CD4-positive, alpha-beta memory T cell (primary cell): ENCODE measurements at regions of chr5 and their contacts with region 1.

Region 1: DNA sequence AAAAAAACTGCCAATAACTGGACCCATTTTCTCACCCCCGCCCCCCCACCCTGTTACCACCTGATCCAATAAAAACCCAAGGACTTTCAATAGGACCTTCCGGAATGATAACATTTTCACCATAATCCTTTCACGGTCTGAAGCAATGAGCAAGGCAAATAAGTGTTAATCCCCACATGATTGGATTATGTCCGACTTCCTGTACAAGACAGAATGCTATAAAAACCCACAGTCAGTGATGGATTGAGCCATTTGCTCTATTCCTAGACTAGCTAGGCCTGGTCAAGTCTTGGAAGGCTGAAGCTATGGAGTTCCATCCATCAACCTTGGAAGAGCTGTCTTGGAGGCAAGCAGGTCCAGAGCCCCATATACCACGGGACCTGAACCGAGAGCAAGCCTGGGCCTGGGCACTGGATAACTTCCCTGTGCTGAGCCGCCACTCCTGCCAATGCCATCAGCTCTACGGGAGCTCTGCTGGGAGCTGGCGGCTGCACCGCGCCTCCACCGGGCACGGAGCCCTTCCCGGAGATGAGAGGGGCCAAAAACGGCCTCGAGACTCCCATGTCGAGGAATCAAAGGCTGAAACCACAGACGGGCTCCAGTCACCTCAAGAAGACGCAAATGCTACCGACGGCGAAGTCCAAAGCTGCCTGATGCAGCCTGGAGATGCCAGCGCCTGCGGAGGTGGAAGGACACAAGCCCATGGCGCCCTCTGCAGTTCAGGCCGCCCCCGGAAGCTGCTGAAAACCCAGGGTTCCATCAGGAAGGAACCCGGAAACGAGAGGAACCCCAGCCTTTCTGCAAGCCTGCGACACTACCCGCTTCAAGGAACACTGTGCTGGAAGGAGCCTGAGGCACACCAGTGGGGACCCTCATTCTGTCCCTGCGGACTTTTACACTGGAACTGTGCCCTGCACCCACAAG is 69.2 kb downstream of the ANXA2R start:
- DNase-seq: no peak
- H3K4me3 ChIP-seq: no peak overlapping the region
- H3K4me3 Mint-ChIP-seq: no peak overlapping the region
- H3K27ac ChIP-seq: no peak overlapping the region
- H3K27ac Mint-ChIP-seq: peak overlapping the region in 2 of 7 donors; percentile 35 to 61
- H3K4me1 ChIP-seq: peaks cover 3% of the 10 kb centered on the region
- H3K4me1 Mint-ChIP-seq: peaks cover 5 to 7% (median 6%) of the 10 kb centered on the region in 4 donors
- H3K27me3 ChIP-seq: no peaks in the 10 kb centered on the region
- H3K27me3 Mint-ChIP-seq: no peaks in the 10 kb centered on the region

Region 2: DNA sequence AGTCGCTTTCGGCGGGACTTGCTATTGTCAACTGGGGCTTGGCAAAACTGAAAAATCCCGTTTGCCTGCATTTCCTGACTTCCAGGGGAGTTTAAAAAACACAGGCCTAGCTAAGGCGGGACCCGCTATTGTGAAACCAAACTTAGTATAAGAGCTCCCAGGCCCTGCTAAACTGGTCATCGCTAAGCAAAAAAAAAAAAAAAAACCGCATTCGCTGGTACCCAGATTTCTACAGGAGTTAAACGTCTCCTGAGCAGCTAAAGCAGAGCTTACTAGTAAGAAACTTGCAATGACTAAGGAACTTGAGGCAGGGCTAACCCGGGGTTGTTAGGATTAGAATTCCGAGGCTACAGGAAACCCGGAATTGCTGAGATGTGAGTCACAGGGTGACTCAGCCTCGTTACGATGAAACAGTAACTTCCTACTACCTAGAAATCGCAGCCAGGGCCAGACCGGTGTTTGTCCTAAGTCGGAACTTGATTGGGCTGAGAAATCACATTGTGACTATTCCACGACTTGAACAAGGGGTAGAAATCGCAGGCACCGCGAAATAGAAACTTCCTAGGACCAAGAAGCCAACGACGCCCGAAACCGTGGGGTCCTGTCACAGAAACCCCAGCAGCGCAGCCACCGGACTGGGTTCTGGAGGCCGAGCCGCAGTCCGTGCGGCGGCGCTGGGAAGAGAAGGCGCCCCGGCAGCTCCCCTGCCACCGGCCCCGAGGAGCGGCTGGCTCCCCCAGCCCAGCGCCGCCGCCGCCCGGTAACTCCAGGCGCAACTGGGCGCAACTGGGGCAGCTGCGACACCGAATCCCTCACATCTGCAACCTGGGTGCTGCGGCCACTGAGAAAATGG is 20.2 kb before region 1 on chr5:
- CTCF ChIA-PET with region 1: interaction called, 5 read pairs
- POLR2A ChIA-PET with region 1: interaction called, 12 read pairs
- intact Hi-C with region 1: no loop called
- DNase-seq: peak; percentile 61 to 90 (median 66)
- H3K4me3 ChIP-seq: peak overlapping the region; percentile 83 to 90
- H3K4me3 Mint-ChIP-seq: peak overlapping the region; percentile 93 to 99 (median 98)
- H3K27ac ChIP-seq: peak overlapping the region; percentile 96
- H3K27ac Mint-ChIP-seq: peak overlapping the region; percentile 99 to 100 (median 100)
- H3K4me1 ChIP-seq: peaks cover 22% of the 10 kb centered on the region
- H3K4me1 Mint-ChIP-seq: peaks cover 7 to 42% (median 30%) of the 10 kb centered on the region in 4 donors
- H3K27me3 ChIP-seq: no peaks in the 10 kb centered on the region
- H3K27me3 Mint-ChIP-seq: no peaks in the 10 kb centered on the region

Region 3: DNA sequence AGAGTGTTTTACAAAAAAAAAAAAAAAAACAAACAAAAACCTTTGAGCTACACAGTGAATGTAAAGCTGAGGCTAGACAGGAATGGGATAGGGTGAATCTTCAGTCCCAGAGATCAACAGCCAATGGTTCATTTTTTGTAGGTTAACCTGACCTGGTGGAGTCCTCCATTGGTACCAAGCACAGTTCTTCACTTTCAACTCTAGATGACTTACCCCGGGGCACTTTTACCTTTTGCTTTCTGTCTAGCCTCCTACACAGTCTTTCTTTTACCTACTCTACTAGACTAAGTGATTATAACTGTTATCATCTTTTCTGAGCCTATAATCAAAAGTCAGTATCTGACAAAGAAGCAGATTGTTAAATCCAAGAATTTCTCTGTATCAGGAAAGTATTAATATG is 18.3 kb after region 1 on chr5:
- CTCF ChIA-PET with region 1: interaction called, 4 read pairs
- POLR2A ChIA-PET with region 1: interaction called, 16 read pairs
- intact Hi-C with region 1: loop called (anchors 2 kb)
- DNase-seq: peak in 4 of 5 donors; percentile 16 to 39 (median 29)
- H3K4me3 ChIP-seq: no peak overlapping the region
- H3K4me3 Mint-ChIP-seq: peak overlapping the region; percentile 93 to 100 (median 100)
- H3K27ac ChIP-seq: peak overlapping the region; percentile 93
- H3K27ac Mint-ChIP-seq: peak overlapping the region; percentile 85 to 100 (median 99)
- H3K4me1 ChIP-seq: peaks cover 67% of the 10 kb centered on the region
- H3K4me1 Mint-ChIP-seq: peaks cover 43 to 88% (median 57%) of the 10 kb centered on the region in 4 donors
- H3K27me3 ChIP-seq: no peaks in the 10 kb centered on the region
- H3K27me3 Mint-ChIP-seq: no peaks in the 10 kb centered on the region

Region 4: DNA sequence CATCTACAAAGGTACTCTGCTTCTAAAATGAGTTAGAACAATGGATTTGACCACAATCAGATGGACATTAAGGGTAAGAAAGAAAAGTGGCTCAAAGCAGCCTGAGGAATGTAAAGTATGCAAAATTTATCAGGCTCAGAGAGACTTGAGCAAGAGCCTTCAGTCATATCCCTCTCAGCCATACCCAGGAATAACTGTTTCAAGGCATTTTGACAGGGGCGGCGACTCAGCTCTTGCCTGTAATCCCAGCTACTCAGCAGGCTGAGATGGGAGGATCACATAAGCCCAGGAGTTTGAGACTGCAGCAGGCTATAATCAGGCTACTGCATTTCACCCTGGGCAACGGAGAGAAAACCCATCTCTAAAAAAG is 108.1 kb after region 1 on chr5:
- CTCF ChIA-PET with region 1: no interaction called
- POLR2A ChIA-PET with region 1: no interaction called
- intact Hi-C with region 1: no loop called
- DNase-seq: no peak
- H3K4me3 ChIP-seq: no peak overlapping the region
- H3K4me3 Mint-ChIP-seq: no peak overlapping the region
- H3K27ac ChIP-seq: no peak overlapping the region
- H3K27ac Mint-ChIP-seq: no peak overlapping the region
- H3K4me1 ChIP-seq: peaks cover 22% of the 10 kb centered on the region
- H3K4me1 Mint-ChIP-seq: peaks cover 12 to 26% (median 18%) of the 10 kb centered on the region in 4 donors
- H3K27me3 ChIP-seq: no peaks in the 10 kb centered on the region
- H3K27me3 Mint-ChIP-seq: no peaks in the 10 kb centered on the region